ENCODE measurements at regions of chr10 and their contacts with region 1.

Region 1: GRCh38 chr10:114103284-114103683 is 59.6 kb downstream of the ADRB1 start:
- DNase-seq: no peak
- ATAC-seq: peak; percentile 73

Region 2: DNA sequence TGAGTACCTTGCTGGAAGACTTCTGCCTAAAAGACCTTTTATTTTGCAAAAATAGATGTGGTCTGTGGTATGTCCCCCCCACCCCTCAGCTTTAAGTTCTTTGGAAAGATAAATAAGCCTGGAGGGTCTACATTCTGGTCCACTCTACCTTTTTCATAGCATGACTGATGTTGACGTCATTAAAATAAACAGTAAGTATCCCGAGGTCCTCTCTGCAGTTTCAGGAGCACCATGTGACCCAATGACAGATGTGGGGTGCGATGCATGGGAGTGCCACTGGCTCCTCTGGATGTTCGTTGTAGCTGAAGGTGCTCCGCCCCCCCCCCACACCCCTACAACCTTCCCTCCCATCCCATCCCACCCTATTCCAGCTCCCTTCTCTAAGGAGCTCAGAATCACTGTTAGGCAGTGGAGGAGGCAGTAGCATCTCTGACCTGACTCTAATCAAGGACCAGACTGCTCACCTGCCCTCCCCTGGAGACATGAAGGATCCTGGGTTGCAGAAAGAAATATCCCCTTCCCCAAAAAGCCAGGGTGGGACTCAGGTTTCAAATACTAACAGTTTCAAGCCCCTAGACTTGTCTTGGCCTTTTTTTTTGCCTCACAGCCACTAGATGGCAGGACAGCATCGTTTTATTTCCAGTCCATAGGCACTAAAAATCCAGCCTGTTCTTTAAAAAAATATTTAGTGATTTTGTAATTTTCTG is 398.5 kb before region 1 on chr10:
- intact Hi-C with region 1: loop called (anchors 2 kb)
- DNase-seq: no peak
- ATAC-seq: peak; percentile 54

Region 3: DNA sequence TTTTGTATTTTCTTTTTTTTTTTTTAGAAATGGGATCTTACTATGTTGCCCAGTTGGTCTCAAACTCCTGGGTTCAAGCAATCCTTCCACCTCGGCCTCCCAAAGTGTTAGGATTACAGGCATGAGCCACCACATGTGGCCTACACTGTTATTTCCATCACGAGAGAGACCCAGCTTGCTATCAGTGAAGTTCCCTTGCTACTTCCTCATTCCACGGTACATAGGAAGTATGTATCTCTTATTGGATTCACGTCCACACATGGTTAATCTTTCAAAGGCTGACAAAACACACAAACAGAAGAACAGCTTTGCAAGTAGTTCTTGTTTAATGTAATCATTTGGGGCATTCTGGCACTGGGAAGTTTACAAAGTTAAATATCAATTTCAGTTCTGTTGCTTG is 300.3 kb before region 1 on chr10:
- intact Hi-C with region 1: loop called (anchors 1 kb)
- DNase-seq: no peak
- ATAC-seq: no peak

Region 4: GRCh38 chr10:113843972-113844485 is 259.3 kb before region 1 on chr10:
- intact Hi-C with region 1: no loop called
- DNase-seq: no peak
- ATAC-seq: no peak

Region 5: DNA sequence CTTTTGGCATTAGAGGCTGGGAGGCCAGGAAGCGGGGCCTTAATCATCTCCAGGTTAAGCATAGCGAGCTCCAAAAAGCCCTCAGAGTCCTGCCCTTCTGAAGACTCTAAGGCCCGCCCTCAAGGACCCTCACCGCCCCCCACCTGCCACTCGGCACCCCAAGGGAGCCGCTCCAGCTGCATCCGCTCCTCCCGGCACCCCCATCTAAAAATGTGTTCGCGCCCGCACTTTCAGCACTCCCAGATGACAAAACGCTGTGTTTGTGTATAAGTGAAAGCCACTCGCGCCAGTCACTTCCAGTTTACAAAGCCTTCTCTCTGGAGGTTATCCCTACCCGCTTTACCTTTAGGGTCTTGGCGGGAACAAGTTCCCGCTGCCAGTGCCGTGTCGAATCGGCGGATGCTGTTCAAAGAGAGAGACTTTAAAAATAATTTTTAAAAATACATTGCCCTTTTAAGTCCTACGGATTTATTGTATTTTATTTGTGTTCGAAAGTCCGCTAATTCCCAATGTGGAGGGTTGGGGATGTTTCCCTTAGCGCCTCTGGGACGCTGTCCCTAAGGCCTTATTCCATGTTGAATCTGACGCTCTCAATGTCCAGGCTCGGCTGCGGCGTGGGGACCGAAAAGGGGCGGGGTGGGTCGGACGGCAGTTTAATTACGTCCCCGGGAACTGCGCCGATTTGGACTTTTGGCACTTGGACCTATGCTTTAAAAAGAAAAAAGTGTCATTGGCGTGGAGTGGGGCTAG is 249.1 kb before region 1 on chr10 and contains the starts of genes DCLRE1A and NHLRC2:
- intact Hi-C with region 1: loop called (anchors 2 kb)
- DNase-seq: peak; percentile 92
- ATAC-seq: peak; percentile 87
- total RNA-seq, gene DCLRE1A: 6.8 TPM
- total RNA-seq, gene NHLRC2: 60.6 TPM

Region 6: GRCh38 chr10:114051714-114052113 is 51.6 kb before region 1 on chr10:
- intact Hi-C with region 1: loop called (anchors 2 kb)
- DNase-seq: no peak
- ATAC-seq: no peak